ENCODE measurements at regions of chr17 and their contacts with region 1.

Region 1: GRCh38 chr17:65809366-65809765 is 247.9 kb upstream of the AXIN2 start:
- DNase-seq: no peak
- H3K4me3 Mint-ChIP-seq: no peak overlapping the region
- H3K27ac Mint-ChIP-seq: peak overlapping the region; percentile 1
- H3K4me1 Mint-ChIP-seq: peaks cover 13% of the 10 kb centered on the region
- H3K27me3 Mint-ChIP-seq: peaks cover 8% of the 10 kb centered on the region

Region 2: DNA sequence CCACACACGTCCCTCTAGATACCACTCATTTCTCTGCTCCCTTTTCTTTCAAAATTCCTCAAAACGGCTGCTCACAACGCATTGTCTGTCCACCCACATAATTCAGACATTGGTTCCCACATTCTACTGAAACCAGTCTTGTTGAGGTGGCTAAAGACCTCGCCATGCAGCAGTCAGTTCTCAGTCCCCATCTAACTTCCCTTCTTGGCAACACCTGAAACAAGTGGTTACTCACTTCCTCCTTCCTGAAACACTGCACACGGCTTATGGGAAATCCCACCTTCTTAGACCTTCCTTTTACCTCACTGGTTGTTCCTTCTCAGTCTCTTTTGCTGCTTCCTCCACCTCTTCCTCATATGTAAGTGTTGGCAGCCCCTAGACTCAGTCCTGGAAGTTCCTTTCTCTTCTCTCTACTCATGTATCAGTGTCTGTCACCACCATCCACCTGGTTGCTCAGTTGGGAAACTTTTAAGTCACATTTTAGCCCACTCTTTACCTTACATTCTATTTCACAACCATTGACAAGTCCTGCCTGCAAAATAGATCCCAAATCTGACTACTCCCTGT is 105.5 kb after region 1 on chr17:
- intact Hi-C with region 1: loop called (anchors 10 kb)
- DNase-seq: no peak
- H3K4me3 Mint-ChIP-seq: no peak overlapping the region
- H3K27ac Mint-ChIP-seq: peak overlapping the region; percentile 65
- H3K4me1 Mint-ChIP-seq: peaks cover 15% of the 10 kb centered on the region
- H3K27me3 Mint-ChIP-seq: no peaks in the 10 kb centered on the region

Measured in activated T-helper 2 cell treated with anti-CD3 and anti-CD28 coated beads, Interferon-gamma antibody, Interleukin-2, Interleukin-4, amounts not matched to agents 10 μg/mL and 5 μg/mL and 100 μg/mL, durations not matched to agents 14 hours and 24 hours and 36 hours (primary cell).